GM10248 (cell line): ENCODE measurements at regions of chr4 and their contacts with region 1.

Region 1: DNA sequence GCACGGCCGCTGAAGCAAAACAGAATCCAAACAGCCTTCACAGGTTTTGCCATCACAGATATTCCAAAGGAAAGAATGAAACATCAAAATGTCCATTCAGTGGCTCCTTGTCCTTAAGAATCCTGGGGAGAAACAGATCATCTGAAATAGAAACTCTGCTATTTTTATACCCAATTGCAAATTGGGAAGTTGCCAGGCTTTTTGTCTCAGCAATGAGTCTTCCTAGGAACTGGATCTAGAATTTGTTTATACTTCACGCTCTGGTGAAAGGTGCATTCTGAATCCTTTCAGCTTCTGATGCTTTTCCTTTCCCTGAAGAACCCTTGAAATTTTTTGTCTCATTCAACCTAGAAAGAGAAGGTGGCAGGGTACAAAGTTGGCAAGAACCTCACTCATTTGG is 218.9 kb downstream of the FBXW7 start:
- DNase-seq: no peak
- CTCF ChIP-seq: no peak

Region 2: GRCh38 chr4:152176627-152177214 is 140.2 kb before region 1 on chr4:
- CTCF ChIA-PET with region 1: no interaction called
- POLR2A ChIA-PET with region 1: interaction called, 13 read pairs
- DNase-seq: no peak
- CTCF ChIP-seq: no peak

Region 3: GRCh38 chr4:152591396-152591795 is 274.4 kb after region 1 on chr4:
- CTCF ChIA-PET with region 1: no interaction called
- POLR2A ChIA-PET with region 1: no interaction called
- DNase-seq: peak; percentile 29
- CTCF ChIP-seq: no peak